Activated T-helper 1 cell treated with anti-CD3 and anti-CD28 coated beads, Interleukin-12 subunit alpha, Interleukin-12 subunit beta, Interleukin-2, Interleukin-4 antibody, amounts not matched to agents 30 ng/mL and 10 ng/mL and 1 ng/mL, durations not matched to agents 14 hours and 24 hours and 36 hours (primary cell): ENCODE measurements at regions of chr17 and their contacts with region 1.

Region 1: GRCh38 chr17:59361916-59362810 is 30.7 kb downstream of the YPEL2 start:
- DNase-seq: peak; percentile 40
- H3K4me3 Mint-ChIP-seq: peak overlapping the region; percentile 66
- H3K27ac Mint-ChIP-seq: peak overlapping the region; percentile 93
- H3K4me1 Mint-ChIP-seq: peaks cover 62% of the 10 kb centered on the region
- H3K27me3 Mint-ChIP-seq: no peaks in the 10 kb centered on the region

Region 2: GRCh38 chr17:59155439-59156182 is 206.6 kb before region 1 on chr17 and contains the start of gene PRR11:
- intact Hi-C with region 1: loop called (anchors 5 kb)
- DNase-seq: peak; percentile 94
- H3K4me3 Mint-ChIP-seq: no peak within 1 kb of the TSS
- H3K27ac Mint-ChIP-seq: no peak within 1 kb of the TSS
- H3K4me1 Mint-ChIP-seq: peaks cover 63% of the 10 kb centered on the region
- H3K27me3 Mint-ChIP-seq: no peaks in the 10 kb centered on the region
- total RNA-seq, gene PRR11: 29.4 and 32.7 TPM in 2 replicates

Region 3: GRCh38 chr17:59331129-59331928 is 30.8 kb before region 1 on chr17 and contains the start of gene YPEL2:
- intact Hi-C with region 1: loop called (anchors 1 kb)
- DNase-seq: peak; percentile 88
- H3K4me3 Mint-ChIP-seq: peak within 1 kb of the TSS; percentile 89
- H3K27ac Mint-ChIP-seq: peak within 1 kb of the TSS; percentile 77
- H3K4me1 Mint-ChIP-seq: peaks cover 52% of the 10 kb centered on the region
- H3K27me3 Mint-ChIP-seq: peaks cover 27% of the 10 kb centered on the region
- total RNA-seq, gene YPEL2: 7.4 and 7.9 TPM in 2 replicates

Region 4: GRCh38 chr17:59372138-59372857 is 10.1 kb after region 1 on chr17:
- intact Hi-C with region 1: loop called (anchors 1 kb)
- DNase-seq: no peak
- H3K4me3 Mint-ChIP-seq: no peak overlapping the region
- H3K27ac Mint-ChIP-seq: peak overlapping the region; percentile 61
- H3K4me1 Mint-ChIP-seq: peaks cover 70% of the 10 kb centered on the region
- H3K27me3 Mint-ChIP-seq: no peaks in the 10 kb centered on the region

Region 5: DNA sequence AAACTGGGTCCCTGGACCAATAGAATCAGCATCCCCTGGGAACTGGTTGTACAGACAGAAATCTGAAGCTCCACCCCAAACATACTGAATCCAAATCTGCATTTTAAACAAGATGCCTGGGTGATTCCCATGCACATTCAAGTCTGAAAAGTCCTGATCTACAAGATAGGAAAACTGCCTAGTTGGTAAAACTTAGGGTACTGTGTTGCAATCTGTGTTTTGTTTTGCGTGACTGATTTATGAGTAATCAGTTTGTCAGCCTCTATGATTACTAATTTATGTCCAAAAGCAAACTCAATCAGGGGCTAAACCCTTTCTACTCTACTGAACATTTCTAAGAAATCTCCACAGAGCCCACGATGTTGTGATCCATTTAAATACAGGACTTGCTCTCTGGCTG is 73.1 kb after region 1 on chr17:
- intact Hi-C with region 1: loop called (anchors 1 kb)
- DNase-seq: no peak
- H3K4me3 Mint-ChIP-seq: no peak overlapping the region
- H3K27ac Mint-ChIP-seq: peak overlapping the region; percentile 88
- H3K4me1 Mint-ChIP-seq: peaks cover 64% of the 10 kb centered on the region
- H3K27me3 Mint-ChIP-seq: peaks cover 3% of the 10 kb centered on the region

Region 6: DNA sequence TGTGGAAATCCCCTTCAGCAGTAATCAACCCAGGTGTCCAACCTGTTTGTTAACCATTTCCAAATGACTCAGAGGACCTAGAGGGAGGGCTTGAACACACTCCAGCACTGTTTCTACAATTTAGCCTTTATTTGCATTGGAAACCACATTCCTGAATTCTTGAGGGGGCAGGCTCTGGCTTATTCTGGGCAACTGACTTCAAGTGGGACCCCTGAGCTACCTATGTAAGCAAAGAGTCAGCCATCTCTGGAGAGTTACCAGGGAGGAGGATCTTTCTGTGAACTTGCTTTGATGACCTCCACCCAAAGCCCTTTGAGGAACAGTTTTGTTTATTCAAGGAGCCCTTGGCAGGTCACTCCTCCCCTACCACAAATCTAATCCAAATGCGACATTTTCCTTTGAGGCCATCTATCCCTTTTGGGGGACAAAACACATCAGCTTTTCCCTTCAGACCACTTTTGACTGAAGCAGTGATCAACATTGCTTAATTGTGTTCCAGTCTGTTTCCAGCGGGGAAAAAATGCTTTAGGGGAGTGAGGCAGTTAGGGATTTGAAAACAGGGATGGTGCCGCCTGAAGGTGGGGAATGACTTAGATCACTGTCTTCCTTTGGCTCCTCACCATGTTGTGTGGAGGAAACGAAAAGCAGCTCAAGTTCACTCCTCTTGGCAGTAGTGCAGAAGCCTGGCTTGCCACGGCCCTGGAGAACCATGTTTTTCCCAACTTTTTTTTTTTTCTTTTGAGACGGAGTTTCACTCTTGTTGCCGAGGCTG is 484.4 kb after region 1 on chr17:
- intact Hi-C with region 1: loop called (anchors 5 kb)
- DNase-seq: peak; percentile 51
- H3K4me3 Mint-ChIP-seq: peak overlapping the region; percentile 50
- H3K27ac Mint-ChIP-seq: peak overlapping the region; percentile 94
- H3K4me1 Mint-ChIP-seq: peaks cover 68% of the 10 kb centered on the region
- H3K27me3 Mint-ChIP-seq: no peaks in the 10 kb centered on the region